GM18951 (cell line): ENCODE measurements at regions of chr17 and their contacts with region 1.

Region 1: GRCh38 chr17:42112552-42113176 is at the start of gene DHX58:
- POLR2A ChIP-seq: peak; percentile 90

Region 2: DNA sequence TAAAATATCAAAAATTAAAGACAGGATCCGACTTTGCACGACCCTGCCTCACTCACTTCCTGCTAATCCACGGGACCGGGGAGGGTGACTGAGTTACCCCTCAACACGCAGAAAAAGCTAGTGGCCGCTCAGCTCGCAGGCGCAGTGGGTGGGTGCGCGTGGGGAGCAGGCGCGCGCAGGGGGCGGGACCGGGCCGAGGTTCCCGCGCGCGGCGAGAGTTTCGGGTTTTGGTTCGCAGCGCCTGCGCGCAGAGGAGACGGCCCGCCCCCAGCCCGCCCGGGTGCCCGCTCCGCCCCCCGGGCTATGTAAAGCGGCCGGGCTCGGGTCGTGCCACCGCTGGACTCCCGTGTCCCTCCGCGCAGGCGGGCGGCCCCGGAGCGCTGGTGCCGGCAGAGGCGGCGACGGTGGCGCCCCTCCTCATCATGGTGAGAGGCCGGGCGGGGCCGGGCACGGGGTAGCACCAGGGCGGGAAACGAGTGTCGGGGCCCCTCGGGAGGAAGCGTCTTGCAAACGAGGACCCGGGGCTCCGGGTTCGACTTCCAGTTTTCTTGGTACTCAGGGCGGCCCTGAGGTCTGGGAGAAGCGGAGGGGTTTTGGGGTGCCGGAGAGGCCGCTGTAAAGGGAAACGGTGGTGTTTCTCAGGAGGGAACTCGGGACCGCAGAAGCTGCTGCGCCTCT is 146.1 kb before region 1 on chr17 and contains the start of gene CNP:
- in situ Hi-C with region 1: loop called (anchors 10 kb)
- POLR2A ChIP-seq: peak; percentile 93

Region 3: DNA sequence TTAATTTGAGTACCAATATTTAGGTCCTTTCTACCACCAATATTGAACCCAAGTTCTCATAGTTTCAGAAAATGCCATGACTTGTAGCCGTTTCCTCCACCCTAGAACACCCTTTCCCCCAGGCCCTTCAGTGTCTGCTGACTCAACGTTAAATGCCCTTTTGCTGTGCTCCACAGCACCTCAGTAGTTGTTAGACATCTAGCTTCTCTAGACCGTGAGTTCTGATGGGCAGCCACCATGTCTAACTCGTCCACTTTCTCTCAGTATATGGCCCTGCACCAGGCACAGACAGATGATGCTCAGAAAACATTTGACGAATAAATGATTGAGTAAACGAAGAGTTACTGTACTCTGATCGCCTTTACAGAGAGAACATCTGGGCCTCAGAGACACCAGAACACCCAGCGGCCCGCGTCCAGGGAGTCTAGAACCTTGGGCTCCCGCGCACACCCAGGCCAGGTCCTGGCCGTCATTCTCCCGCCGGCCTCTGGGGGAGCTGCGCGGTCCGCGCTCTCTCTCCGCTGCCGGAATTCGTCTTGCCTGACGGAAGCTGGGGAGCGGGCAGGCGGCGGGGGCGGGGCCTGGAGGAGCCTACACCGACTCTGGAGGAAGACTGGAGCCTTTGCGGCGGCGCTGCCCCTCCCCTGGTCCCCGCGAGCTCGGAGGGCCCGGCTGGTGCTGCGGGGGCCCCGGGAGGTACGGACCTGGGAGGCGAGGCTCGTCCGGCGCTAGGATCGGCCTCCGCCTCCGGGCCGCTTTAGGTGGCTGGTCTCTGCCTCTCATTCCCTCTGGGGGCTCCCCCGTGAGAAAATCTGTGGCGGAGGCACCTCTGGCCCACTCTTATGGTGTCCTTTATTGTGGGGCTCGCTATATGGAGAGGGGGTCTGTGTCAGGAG is 92.9 kb before region 1 on chr17 and contains the start of gene NKIRAS2:
- in situ Hi-C with region 1: loop called (anchors 10 kb)
- POLR2A ChIP-seq: peak; percentile 92

Region 4: GRCh38 chr17:42163113-42163512 is 50.4 kb after region 1 on chr17:
- in situ Hi-C with region 1: no loop called
- POLR2A ChIP-seq: no peak

Region 5: DNA sequence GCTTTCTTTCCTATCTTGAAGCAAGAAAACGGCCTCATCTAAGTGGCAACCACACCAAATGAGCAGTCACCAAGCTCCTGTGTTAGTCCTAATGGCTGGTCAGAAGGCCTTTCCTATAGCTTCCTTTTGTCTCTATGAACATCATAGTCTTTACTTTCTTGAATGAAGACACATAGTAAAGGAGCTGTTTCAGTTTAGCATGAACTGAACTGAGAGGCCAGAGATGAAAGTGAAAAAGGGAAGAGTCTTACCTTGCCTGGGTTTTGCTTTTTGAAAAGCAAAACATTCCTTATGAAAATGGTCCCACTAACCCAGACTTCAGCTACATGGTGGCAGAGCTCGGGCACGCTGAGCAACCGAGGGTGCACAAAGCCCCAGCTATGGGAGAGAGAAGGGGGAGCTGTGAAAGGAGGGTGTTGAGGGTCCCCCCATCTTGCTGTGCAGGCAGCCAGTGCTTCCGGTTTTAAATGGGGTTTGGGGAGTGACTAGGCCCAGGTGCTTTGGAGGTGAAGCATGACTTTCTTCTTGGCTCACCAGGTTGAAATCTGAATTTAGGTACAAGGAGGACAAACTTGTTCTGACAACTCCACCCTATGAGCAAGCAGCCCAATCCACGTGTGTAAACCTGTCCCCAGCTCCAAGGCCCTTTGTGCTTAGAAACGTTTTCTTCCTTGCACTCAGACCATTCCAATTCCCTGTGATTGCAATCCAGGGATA is 474.0 kb after region 1 on chr17:
- in situ Hi-C with region 1: no loop called
- POLR2A ChIP-seq: no peak

Region 6: DNA sequence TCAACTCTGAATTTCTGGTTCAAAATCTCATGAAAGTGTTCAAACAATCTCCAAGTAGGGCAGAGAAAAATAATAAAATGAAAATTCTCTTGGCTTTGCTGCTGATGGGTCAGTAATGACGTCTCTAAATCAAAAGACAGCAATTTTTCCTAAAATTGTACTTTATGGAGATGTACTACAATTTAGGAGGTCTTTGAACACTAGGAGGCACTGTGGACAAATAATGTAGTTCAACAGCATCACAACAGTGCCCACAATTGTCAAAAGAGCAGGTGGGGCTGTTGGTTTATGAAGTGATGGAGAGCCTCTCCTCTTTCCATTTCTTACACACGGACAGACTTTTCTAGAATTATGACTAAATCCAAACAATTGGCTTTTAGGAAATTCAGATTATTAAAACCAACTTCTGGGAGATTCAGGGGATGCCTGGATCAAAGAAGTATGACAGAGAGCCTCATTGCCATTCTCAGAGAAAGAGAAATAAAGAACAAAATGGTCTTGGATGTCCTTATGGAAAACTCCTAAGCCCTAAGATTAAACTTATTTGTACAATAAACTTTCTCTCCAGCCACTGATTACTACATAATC is 608.4 kb after region 1 on chr17:
- in situ Hi-C with region 1: no loop called
- POLR2A ChIP-seq: no peak